Activated CD4-positive, alpha-beta memory T cell treated with anti-CD3 and anti-CD28 coated beads, Interleukin-2, amount 10 ng/mL, durations not matched to agents 7 days and 5 days (primary cell): ENCODE measurements at regions of chr11 and their contacts with region 1.

Region 1: DNA sequence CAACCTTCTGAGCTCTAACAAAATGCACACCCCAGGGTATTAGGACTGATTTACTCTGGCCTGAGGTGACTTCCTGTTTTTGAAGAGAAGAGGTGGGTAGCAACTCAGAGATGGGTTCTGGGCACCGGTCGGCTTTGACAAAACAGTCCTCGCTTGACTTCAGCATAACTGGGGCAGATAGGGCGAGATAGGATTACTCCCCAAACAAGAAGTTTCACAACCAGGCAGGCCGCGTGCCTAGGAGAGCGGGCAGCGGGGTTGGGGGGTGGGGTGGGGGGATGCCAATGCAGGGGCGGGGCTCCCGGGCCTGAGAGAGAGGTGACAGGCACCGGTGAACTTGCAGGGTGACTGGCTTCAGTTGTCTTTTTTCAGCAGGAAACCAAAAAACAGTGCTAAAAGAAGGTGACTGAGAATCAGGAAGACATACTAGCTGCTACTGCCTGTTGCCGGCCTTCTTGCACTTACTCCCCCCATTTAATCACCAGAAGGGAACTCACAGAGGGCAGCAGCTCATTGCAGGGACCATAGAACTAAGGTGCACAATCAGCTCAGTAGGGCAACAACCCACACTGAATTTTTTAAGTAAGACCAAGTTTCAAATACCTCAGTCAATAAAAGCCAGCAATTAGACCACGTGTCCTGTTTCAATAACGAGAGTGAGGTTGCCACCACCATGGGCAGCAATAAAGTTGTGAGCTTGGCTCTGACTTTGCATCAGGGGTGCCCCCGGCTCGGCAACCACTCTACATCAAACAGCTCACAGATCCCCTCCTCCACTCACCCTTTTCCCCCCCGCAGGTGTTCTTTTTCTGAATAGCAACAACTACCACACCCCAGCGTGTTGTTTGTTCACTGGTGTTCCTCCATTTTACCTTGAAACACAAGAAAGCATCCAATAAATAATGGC is 37.2 kb upstream of the ETS1 start:
- DNase-seq: peak; percentile 75
- H3K4me3 Mint-ChIP-seq: peak overlapping the region; percentile 55
- H3K27ac Mint-ChIP-seq: peak overlapping the region; percentile 93
- H3K4me1 Mint-ChIP-seq: peaks cover 84% of the 10 kb centered on the region
- H3K27me3 Mint-ChIP-seq: no peaks in the 10 kb centered on the region

Region 2: GRCh38 chr11:128506999-128507611 is 117.4 kb before region 1 on chr11:
- CTCF ChIA-PET with region 1: interaction called, 80 read pairs
- POLR2A ChIA-PET with region 1: interaction called, 57 read pairs
- DNase-seq: no peak
- H3K4me3 Mint-ChIP-seq: peak overlapping the region; percentile 69
- H3K27ac Mint-ChIP-seq: peak overlapping the region; percentile 71
- H3K4me1 Mint-ChIP-seq: peaks cover 99% of the 10 kb centered on the region
- H3K27me3 Mint-ChIP-seq: no peaks in the 10 kb centered on the region

Region 3: GRCh38 chr11:128552783-128553661 is 71.5 kb before region 1 on chr11:
- CTCF ChIA-PET with region 1: interaction called, 3 read pairs
- POLR2A ChIA-PET with region 1: interaction called, 20 read pairs
- DNase-seq: peak; percentile 30
- H3K4me3 Mint-ChIP-seq: peak overlapping the region; percentile 27
- H3K27ac Mint-ChIP-seq: peak overlapping the region; percentile 89
- H3K4me1 Mint-ChIP-seq: peaks cover 56% of the 10 kb centered on the region
- H3K27me3 Mint-ChIP-seq: no peaks in the 10 kb centered on the region